ENCODE measurements at regions of chr7 and their contacts with region 1.

Region 1: GRCh38 chr7:144738708-144739314 is 97.0 kb downstream of the TPK1 start:
- DNase-seq: peak; percentile 5
- H3K4me3 Mint-ChIP-seq: no peak overlapping the region
- H3K27ac Mint-ChIP-seq: no peak overlapping the region
- H3K4me1 Mint-ChIP-seq: peaks cover 8% of the 10 kb centered on the region
- H3K27me3 Mint-ChIP-seq: no peaks in the 10 kb centered on the region
- CTCF ChIP-seq: peak; percentile 32

Region 2: DNA sequence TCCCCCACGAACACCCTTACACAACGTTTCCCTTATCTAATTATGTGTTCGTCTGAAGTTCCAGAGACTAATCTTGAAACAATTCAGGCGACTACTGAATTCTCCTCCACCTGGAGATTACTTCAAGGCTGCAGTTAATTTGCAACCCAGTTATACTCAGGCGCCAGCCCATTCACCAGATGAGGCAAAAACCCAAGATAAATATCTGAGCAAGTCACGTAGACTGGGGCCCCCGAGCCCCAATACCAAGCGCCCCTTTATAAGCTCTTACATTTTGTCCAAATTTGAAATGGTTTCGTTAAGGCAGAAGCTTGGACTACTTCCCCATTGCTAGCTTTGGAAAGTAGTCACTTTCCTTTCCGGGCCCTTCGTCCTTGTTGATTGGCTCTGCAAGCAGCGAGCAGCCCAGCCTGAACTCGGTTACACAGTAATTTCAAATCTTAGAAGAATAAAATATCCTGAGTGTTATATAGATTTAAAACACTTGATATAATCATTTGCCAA is 95.9 kb after region 1 on chr7:
- CTCF ChIA-PET with region 1: no interaction called
- intact Hi-C with region 1: loop called (anchors 5 kb)
- DNase-seq: peak; percentile 26
- H3K4me3 Mint-ChIP-seq: peak overlapping the region; percentile 92
- H3K27ac Mint-ChIP-seq: peak overlapping the region; percentile 93
- H3K4me1 Mint-ChIP-seq: peaks cover 35% of the 10 kb centered on the region
- H3K27me3 Mint-ChIP-seq: no peaks in the 10 kb centered on the region
- CTCF ChIP-seq: no peak

Region 3: DNA sequence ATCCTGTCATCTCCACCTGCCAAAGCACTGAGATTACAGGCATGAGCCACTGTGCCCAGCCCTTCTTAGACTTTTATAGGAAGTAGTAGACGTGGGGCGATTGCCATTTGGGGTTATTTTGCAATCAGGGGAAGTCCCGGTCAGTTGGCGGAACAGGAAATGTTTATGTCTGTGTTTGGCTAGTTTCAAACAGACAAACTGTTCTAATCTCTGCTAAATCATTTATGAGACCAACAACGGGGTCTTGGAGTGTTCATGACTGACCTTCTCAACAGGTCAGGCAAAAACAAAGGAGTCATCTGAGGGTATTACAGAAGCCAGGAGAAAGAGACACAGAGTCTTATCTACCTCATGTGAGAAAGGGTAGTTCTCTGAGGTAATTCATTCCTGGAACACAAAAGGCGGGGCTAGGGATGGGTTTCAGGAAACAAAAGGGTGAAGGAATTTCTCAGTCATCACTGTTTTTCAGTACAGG is 103.6 kb after region 1 on chr7:
- CTCF ChIA-PET with region 1: no interaction called
- intact Hi-C with region 1: loop called (anchors 1 kb)
- DNase-seq: peak; percentile 80
- H3K4me3 Mint-ChIP-seq: peak overlapping the region; percentile 61
- H3K27ac Mint-ChIP-seq: peak overlapping the region; percentile 100
- H3K4me1 Mint-ChIP-seq: peaks cover 13% of the 10 kb centered on the region
- H3K27me3 Mint-ChIP-seq: no peaks in the 10 kb centered on the region
- CTCF ChIP-seq: no peak

Measured in Calu3 (cell line).